HCT116 (cell line): ENCODE measurements at regions of chr10 and their contacts with region 1.

Region 1: GRCh38 chr10:63720072-63720537 is 198.9 kb downstream of the REEP3 start:
- DNase-seq: peak; percentile 62
- ATAC-seq: peak; percentile 75
- H3K4me3 ChIP-seq: no peak overlapping the region
- H3K27ac ChIP-seq: no peak overlapping the region
- H3K4me1 ChIP-seq: peaks cover 17 to 34% of the 10 kb centered on the region in 2 experiments; a peak in 3 of 4 replicates
- H3K27me3 ChIP-seq: no peaks in the 10 kb centered on the region
- CTCF ChIP-seq: peak; percentile 90 to 96 (median 93)
- POLR2A ChIP-seq: no peak
- RAD21 ChIP-seq: peak; percentile 98

Region 2: DNA sequence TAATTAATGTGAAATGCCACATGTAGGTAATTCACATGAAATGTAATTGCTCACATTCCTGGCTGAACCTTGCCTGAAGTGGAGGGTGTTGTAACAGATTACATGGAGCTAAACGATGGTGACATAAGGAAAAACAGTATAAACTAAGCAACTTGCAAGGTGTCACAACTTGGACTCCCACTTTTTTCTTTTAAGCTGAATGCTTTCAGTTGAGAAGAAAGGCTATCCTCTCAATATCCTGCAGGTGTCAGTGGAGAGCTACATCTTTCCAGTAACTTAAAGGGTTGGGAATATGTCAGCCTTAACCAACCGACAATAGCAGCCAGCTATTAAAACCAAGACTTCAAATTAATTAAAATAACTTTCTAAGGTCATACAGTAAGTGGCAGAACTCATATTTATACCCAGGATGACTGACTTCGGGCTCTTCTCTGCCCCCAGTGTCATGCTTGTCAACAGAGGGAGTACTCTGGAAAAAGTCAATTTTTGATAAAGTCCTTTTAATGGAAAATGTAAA is 553.3 kb before region 1 on chr10:
- CTCF ChIA-PET with region 1: interaction called, 159 read pairs
- POLR2A ChIA-PET with region 1: interaction called, 5 read pairs
- RAD21 ChIA-PET with region 1: interaction called, 10 to 11 read pairs
- intact Hi-C with region 1: loop called (anchors 1 kb)
- DNase-seq: peak; percentile 64
- ATAC-seq: peak; percentile 86
- H3K4me3 ChIP-seq: no peak overlapping the region
- H3K27ac ChIP-seq: no peak overlapping the region
- H3K4me1 ChIP-seq: no peaks in the 10 kb centered on the region
- H3K27me3 ChIP-seq: no peaks in the 10 kb centered on the region
- CTCF ChIP-seq: peak; percentile 71 to 74 (median 74)
- POLR2A ChIP-seq: no peak
- RAD21 ChIP-seq: peak; percentile 79

Region 3: GRCh38 chr10:63217120-63217605 is 502.9 kb before region 1 on chr10:
- CTCF ChIA-PET with region 1: interaction called, 4 read pairs
- POLR2A ChIA-PET with region 1: no interaction called
- RAD21 ChIA-PET with region 1: no interaction called
- intact Hi-C with region 1: loop called (anchors 1 kb)
- DNase-seq: peak; percentile 27
- ATAC-seq: peak; percentile 94
- H3K4me3 ChIP-seq: no peak overlapping the region
- H3K27ac ChIP-seq: no peak overlapping the region
- H3K4me1 ChIP-seq: 0 out of 4 replicates have a peak, but pooled peaks cover 0 to 4% of the 10 kb centered on the region in 2 experiments
- H3K27me3 ChIP-seq: no peaks in the 10 kb centered on the region
- CTCF ChIP-seq: peak; percentile 53 to 69 (median 67)
- POLR2A ChIP-seq: no peak
- RAD21 ChIP-seq: peak; percentile 78

Region 4: GRCh38 chr10:63528084-63528747 is 191.9 kb before region 1 on chr10:
- CTCF ChIA-PET with region 1: no interaction called
- POLR2A ChIA-PET with region 1: no interaction called
- RAD21 ChIA-PET with region 1: no interaction called
- intact Hi-C with region 1: no loop called
- DNase-seq: no peak
- ATAC-seq: no peak
- H3K4me3 ChIP-seq: no peak overlapping the region
- H3K27ac ChIP-seq: no peak overlapping the region
- H3K4me1 ChIP-seq: peaks cover 2 to 3% of the 10 kb centered on the region in 2 experiments; a peak in 2 of 4 replicates
- H3K27me3 ChIP-seq: no peaks in the 10 kb centered on the region
- CTCF ChIP-seq: no peak
- POLR2A ChIP-seq: no peak
- RAD21 ChIP-seq: no peak

Region 5: GRCh38 chr10:63644418-63645142 is 75.5 kb before region 1 on chr10:
- CTCF ChIA-PET with region 1: no interaction called
- POLR2A ChIA-PET with region 1: no interaction called
- RAD21 ChIA-PET with region 1: no interaction called
- intact Hi-C with region 1: no loop called
- DNase-seq: no peak
- ATAC-seq: no peak
- H3K4me3 ChIP-seq: no peak overlapping the region
- H3K27ac ChIP-seq: no peak overlapping the region
- H3K4me1 ChIP-seq: no peaks in the 10 kb centered on the region
- H3K27me3 ChIP-seq: no peaks in the 10 kb centered on the region
- CTCF ChIP-seq: no peak
- POLR2A ChIP-seq: no peak
- RAD21 ChIP-seq: no peak

Region 6: DNA sequence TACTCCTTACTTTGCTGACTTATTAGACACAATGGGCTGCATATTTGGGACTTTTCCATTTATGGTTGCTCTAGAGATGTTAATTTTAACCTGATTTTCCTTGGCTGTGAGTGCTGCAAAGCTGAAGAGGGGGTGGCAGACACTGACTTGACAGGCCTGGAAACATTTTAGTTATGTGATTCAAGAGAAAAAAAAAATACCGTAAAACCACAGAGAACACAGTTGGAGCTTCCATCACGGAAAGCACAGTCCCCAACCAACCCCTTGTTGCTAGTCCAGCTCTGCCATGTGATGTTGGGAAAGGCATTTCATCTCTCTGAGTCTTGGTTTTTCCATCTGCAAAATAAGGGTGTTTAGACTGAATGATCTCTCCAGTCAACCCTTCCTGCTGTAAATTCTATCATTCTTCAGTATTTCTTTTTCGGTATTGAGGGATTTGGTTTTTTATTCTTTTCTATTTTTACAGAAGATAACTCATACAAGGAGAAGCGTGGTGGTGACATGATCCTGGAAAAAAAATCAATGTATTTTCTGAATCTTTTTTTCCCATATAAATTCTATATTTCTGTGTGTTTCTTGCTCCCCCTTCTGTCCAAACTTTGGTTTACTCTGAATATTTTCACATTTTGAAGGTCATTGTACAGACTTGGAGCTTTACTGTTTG is 47.2 kb after region 1 on chr10:
- CTCF ChIA-PET with region 1: interaction called, 41 read pairs
- POLR2A ChIA-PET with region 1: no interaction called
- RAD21 ChIA-PET with region 1: interaction called, 5 to 6 read pairs
- intact Hi-C with region 1: no loop called
- DNase-seq: no peak
- ATAC-seq: peak; percentile 63; the same call in 1 of the 2 replicates
- H3K4me3 ChIP-seq: no peak overlapping the region
- H3K27ac ChIP-seq: no peak overlapping the region
- H3K4me1 ChIP-seq: no peaks in the 10 kb centered on the region
- H3K27me3 ChIP-seq: no peaks in the 10 kb centered on the region
- CTCF ChIP-seq: peak; percentile 37 to 68 (median 59)
- POLR2A ChIP-seq: no peak
- RAD21 ChIP-seq: peak; percentile 74

Region 7: DNA sequence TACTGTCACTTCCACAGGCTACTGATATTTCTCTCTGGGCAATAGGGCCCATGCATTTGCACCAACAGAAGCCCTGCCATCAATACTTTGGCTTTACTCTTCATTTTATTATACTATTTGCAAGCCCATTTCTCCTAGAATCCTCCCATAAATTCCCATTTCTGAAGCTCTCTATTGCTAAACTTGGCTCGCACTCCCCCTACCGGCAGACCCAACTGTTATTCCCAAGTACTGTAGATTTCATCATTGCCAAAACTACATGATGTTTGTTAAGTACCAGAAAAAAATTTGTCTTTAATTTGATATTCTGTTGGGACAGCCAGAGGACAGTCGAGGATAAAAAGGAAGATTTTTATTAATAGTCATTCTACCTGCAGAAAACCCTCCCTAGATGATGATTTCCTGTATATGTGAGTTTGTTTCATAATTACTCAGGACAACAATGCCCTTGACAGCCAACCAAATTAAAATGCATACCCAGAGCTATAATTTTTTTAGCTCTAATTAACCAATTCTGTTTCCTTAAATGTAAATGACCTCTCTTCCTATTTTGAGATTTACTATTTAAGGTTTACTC is 99.7 kb after region 1 on chr10:
- CTCF ChIA-PET with region 1: interaction called, 14 read pairs
- POLR2A ChIA-PET with region 1: no interaction called
- RAD21 ChIA-PET with region 1: interaction called in 1 of 2 experiments, 5 read pairs
- intact Hi-C with region 1: no loop called
- DNase-seq: peak; percentile 59
- ATAC-seq: peak; percentile 81
- H3K4me3 ChIP-seq: no peak overlapping the region
- H3K27ac ChIP-seq: no peak overlapping the region
- H3K4me1 ChIP-seq: no peaks in the 10 kb centered on the region
- H3K27me3 ChIP-seq: no peaks in the 10 kb centered on the region
- CTCF ChIP-seq: peak; percentile 34 to 92 (median 81); a peak in 5 of 6 replicates
- POLR2A ChIP-seq: no peak
- RAD21 ChIP-seq: peak; percentile 65